Right cardiac atrium (tissue), 5 donors: ENCODE measurements at regions of chr1 and their contacts with region 1.

Region 1: DNA sequence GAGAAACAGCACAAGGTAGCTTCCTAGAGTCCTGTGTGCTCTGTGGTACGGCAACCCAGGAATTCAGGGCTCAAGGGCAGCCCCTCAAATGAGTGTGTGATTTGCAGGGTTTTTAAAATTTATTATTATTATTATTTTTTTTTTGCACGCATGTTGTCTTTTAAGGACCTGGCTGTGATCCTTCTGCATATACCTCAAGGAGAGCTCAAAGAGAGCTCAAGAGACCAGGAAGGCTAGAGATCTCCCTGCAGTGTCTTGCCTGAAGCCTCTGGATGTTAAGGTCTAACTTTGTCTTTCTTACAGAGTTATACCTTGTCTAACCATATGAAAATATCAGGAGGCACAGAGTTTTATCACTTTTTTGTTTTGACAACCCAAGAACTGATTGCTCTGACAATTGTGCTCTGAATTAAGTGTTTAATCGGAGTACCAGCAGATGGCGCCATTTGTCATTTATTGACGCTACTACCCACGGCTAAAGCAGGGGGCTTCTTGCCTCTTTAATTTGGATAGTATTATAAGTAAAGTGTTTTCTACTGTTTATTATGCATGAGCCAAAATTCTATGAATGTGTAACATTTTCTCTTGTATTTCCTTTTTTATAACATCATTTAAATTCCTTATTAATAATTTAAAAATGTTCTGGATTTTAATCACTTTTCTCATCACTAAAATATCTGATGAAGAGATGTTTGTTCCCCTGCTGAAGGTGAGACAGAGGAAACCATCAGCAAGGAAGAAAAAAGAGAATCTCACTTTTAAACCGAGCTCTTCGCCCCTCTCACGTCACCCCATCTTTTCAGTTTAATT is 35.8 kb upstream of the LMO4 start:
- DNase-seq: peak in 2 of 3 donors; percentile 48 to 52
- ATAC-seq: peak; percentile 69 to 72
- H3K4me3 ChIP-seq: no peak overlapping the region
- H3K27ac ChIP-seq: no peak overlapping the region
- H3K4me1 ChIP-seq: no peaks in the 10 kb centered on the region
- H3K27me3 ChIP-seq: no peaks in the 10 kb centered on the region

Region 2: DNA sequence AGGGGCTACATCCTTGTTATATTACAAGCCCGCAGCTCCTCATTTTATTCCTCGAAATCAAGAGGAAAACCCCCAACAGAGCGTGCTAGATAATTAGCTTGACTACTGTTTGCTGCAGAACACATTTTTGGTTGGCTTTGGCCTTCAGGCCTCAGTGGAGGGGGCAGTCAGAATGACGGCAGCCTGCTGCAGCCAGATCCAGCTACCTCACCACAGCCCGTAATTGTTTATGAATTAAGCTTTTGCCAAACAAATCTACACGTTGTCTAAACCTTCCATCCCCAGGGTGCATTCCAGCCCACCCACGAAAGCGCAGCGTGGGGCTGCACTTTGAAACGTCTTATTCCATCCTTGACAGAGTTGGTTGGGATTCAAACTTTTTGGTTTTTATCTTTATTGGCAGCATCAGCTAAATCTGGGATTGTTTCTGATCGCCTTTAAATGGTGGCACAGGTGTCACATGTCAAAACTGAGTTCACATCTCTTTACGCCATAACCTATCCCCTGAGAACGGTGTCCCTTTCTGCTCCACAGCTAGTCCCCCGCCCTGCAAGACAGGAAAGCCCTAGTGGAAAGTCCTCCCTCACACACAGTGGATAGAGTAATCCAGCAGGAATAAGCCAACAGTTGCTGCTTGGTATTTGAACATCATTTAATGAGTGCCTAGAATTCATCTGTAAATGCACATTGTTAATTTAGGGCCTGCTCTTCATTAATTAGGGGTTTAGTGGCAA is 231.3 kb after region 1 on chr1:
- intact Hi-C with region 1: no loop called
- DNase-seq: peak in 1 of 3 donors; percentile 34
- ATAC-seq: peak; percentile 48 to 53
- H3K4me3 ChIP-seq: no peak overlapping the region
- H3K27ac ChIP-seq: no peak overlapping the region
- H3K4me1 ChIP-seq: no peaks in the 10 kb centered on the region
- H3K27me3 ChIP-seq: no peaks in the 10 kb centered on the region

Region 3: DNA sequence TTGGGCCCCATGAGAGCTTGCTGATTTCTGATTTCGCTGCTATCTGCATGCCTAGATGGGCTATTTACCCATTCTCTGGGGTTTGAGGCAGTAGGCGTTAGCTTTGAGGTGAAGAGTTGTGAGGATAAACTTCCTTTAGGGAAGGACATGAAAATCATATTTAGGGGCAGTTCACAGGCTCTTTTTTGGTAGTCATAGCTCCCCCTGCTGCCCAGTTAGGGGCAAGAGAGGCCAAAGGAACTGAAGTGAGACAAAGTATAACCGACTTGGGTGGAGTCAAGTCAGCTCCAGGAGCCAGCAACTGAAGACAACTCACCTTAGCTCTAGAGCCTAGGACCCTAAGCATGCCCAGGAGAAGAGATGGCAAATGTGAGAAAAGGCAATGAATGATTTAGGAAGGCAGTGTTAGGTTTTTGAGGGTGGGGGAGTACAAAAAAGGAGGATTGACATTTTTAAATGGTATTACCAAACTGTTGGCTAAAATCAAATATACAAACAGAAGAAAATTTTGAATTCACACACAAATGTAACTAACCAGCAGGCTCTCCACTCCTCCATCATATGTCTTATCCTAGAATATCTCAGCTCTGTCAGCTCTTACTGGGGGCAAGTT is 660.9 kb after region 1 on chr1:
- intact Hi-C with region 1: loop called in 3 of 4 experiments (anchors 10 kb)
- DNase-seq: peak; percentile 59 to 73 (median 70)
- ATAC-seq: peak; percentile 75 to 81
- H3K4me3 ChIP-seq: no peak overlapping the region
- H3K27ac ChIP-seq: no peak overlapping the region
- H3K4me1 ChIP-seq: peaks cover 6% of the 10 kb centered on the region
- H3K27me3 ChIP-seq: no peaks in the 10 kb centered on the region

Region 4: GRCh38 chr1:88061492-88062177 is 768.7 kb after region 1 on chr1:
- intact Hi-C with region 1: loop called in 1 of 4 experiments (anchors 10 kb)
- DNase-seq: peak; percentile 40 to 69 (median 49)
- ATAC-seq: peak; percentile 83 to 86
- H3K4me3 ChIP-seq: no peak overlapping the region
- H3K27ac ChIP-seq: no peak overlapping the region
- H3K4me1 ChIP-seq: no peaks in the 10 kb centered on the region
- H3K27me3 ChIP-seq: no peaks in the 10 kb centered on the region

Region 5: DNA sequence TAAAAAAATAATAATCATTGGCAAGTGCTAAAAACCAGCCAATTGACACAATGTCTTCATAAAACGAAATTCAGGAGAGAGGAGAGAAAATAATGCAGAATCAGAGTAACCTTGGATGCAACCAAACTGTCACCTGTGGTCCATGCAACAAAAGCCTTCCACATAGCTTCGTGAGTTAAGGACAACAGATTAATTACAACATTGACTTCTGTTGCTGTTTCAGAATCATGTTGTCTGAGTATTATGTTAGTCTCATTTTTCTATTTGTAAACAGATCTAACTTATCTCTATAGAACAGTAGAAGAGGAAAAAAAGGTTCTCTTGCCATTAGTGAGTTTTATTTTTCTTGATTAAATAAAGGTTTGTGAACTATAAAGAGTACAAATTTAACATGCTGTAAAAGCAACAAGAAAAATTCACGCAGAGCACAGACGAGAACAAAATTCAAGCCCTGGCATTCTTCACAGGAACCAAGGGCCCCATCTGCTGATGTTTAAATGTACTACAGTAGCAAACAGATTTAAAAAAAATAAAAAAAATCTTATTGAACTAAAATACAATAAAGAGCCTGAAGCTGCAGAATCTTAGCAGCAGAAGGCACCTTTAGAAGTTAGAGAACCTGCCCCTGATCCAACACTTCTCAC is 1010.1 kb after region 1 on chr1:
- intact Hi-C with region 1: loop called in 2 of 4 experiments (anchors 10 kb)
- DNase-seq: no peak
- ATAC-seq: no peak
- H3K4me3 ChIP-seq: no peak overlapping the region
- H3K27ac ChIP-seq: no peak overlapping the region
- H3K4me1 ChIP-seq: no peaks in the 10 kb centered on the region
- H3K27me3 ChIP-seq: no peaks in the 10 kb centered on the region